Endothelial cell of umbilical vein (primary cell): ENCODE measurements at regions of chr5 and their contacts with region 1.

Region 1: GRCh38 chr5:43540746-43541145 is 16.1 kb downstream of the PAIP1 start:
- DNase-seq: no peak
- H3K4me3 ChIP-seq: no peak overlapping the region
- H3K27ac ChIP-seq: no peak overlapping the region
- H3K4me1 ChIP-seq: no peaks in the 10 kb centered on the region
- H3K27me3 ChIP-seq: no peaks in the 10 kb centered on the region
- CTCF ChIP-seq: no peak
- POLR2A ChIP-seq: no peak

Region 2: DNA sequence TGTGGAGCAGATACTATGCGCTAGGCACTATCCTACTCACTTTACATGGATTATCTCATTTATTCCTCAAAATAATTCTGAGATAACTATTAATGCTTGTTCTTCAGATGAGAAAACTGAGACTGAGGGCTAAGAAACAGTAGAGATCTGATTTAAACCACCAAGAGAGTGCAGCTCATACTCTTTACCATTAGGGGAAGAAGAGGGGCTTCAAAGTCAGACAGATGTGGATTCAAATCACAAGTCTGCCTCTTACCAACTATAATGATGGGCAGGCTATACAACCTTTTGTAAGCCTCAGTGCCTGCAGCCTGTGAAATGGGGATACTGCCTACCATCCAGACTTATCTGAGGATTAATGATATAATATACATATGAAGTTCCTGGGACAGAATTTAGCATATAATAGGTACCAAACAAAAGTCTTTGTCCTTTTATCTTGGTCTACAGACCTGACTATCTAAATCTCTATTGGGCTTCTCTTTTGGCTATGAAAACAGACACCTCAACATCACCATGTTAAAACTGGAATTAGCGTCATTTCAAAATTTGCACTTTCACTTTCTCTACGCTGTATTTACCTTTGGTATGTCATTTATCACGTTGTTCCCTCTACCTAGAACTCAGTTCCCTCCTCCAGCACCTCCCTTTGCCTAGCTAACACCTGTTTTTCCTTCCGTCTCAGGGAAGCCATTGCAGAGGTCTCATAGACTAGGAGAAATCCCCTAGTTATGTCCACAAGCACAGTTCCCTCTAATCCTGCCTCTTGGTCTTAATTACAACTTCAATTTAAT is 43.2 kb before region 1 on chr5:
- CTCF ChIA-PET with region 1: no interaction called
- POLR2A ChIA-PET with region 1: no interaction called
- dilution Hi-C with region 1: no loop called
- intact Hi-C with region 1: loop called (anchors 2 kb)
- DNase-seq: no peak
- H3K4me3 ChIP-seq: no peak overlapping the region
- H3K27ac ChIP-seq: no peak overlapping the region
- H3K4me1 ChIP-seq: no peaks in the 10 kb centered on the region
- H3K27me3 ChIP-seq: no peaks in the 10 kb centered on the region
- CTCF ChIP-seq: no peak
- POLR2A ChIP-seq: no peak